Activated B cell treated with CpG ODN at 0.5 μM for 24 hours (primary cell): ENCODE measurements at regions of chr16 and their contacts with region 1.

Region 1: DNA sequence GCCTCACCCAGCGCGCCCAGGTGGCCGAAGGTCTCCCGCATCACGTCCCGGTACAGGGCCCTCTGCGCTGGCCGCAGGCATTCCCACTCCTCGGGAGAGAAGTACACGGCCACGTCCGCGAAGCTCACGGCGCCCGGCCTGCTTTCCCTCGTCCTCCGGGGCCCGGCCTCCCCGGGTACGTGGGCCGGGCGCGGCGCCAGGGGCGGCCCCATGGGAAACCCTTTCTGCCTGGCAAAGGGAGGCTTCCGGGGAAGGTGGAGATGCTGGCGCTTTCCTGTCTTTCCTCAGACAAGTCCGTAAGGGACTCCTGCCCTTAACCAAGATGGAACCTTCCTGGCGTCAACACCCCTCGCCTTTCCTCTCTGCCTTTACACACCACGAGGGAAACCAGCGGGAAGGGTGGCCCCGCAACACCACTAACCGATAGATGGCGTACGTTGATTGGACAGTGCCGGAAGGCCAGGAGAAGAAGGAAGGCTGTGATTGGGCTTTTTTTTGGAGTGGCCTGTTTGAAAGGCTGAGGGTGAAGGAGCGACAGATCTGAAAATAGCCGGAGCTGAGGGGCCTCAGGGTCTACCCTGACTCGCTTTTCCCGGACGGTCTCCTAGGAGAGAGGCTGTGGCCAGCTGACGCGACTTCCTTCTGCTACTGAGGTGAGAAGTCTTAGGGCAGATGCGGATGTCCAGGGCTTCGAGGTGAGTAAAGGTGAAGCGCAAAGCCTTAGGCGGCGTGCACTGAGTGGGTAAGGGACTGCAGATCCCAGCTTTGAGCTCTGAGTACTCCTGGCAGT is at the start of gene ZNF785:
- DNase-seq: peak; percentile 76
- ATAC-seq: peak; percentile 99
- H3K4me3 Mint-ChIP-seq: peak within 1 kb of the TSS; percentile 85
- H3K27ac Mint-ChIP-seq: peak within 1 kb of the TSS; percentile 79
- H3K4me1 Mint-ChIP-seq: peaks cover 19% of the 10 kb centered on the region
- H3K27me3 Mint-ChIP-seq: no peaks in the 10 kb centered on the region
- CTCF ChIP-seq: no peak
- total RNA-seq, gene ZNF785: 20.0 and 22.8 TPM in 2 replicates

Region 2: GRCh38 chr16:30557957-30558788 is 27.4 kb before region 1 on chr16 and contains the start of gene ZNF764:
- CTCF ChIA-PET with region 1: no interaction called
- POLR2A ChIA-PET with region 1: interaction called, 18 read pairs
- intact Hi-C with region 1: loop called (anchors 1 kb)
- DNase-seq: peak; percentile 91
- ATAC-seq: peak; percentile 93
- H3K4me3 Mint-ChIP-seq: peak within 1 kb of the TSS; percentile 83
- H3K27ac Mint-ChIP-seq: peak within 1 kb of the TSS; percentile 84
- H3K4me1 Mint-ChIP-seq: peaks cover 43% of the 10 kb centered on the region
- H3K27me3 Mint-ChIP-seq: no peaks in the 10 kb centered on the region
- CTCF ChIP-seq: no peak
- total RNA-seq, gene ZNF764: 16.1 and 19.2 TPM in 2 replicates

Region 3: DNA sequence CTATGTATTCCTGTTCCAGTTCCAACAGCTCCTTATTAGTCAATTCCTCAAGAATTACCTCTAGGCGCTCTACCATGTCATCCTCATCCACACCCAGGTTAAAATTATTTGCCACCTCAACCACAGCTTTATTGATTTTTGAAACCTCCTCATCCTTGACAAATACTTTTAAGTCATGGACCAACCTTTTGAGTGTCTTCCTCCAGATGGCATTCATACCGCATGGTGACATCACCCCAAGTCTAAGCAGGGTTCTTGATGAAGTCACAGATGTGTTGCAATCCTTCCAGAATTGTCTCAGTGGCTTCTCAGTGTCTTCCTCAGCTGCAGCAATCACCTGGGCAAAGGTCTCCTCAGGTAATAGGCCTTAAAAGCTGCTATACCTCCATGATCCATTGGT is 268.2 kb after region 1 on chr16:
- CTCF ChIA-PET with region 1: no interaction called
- POLR2A ChIA-PET with region 1: no interaction called
- intact Hi-C with region 1: no loop called
- DNase-seq: no peak
- ATAC-seq: no peak
- H3K4me3 Mint-ChIP-seq: no peak overlapping the region
- H3K27ac Mint-ChIP-seq: no peak overlapping the region
- H3K4me1 Mint-ChIP-seq: no peaks in the 10 kb centered on the region
- H3K27me3 Mint-ChIP-seq: no peaks in the 10 kb centered on the region
- CTCF ChIP-seq: no peak